ENCODE measurements at regions of chr6 and their contacts with region 1.

Region 1: DNA sequence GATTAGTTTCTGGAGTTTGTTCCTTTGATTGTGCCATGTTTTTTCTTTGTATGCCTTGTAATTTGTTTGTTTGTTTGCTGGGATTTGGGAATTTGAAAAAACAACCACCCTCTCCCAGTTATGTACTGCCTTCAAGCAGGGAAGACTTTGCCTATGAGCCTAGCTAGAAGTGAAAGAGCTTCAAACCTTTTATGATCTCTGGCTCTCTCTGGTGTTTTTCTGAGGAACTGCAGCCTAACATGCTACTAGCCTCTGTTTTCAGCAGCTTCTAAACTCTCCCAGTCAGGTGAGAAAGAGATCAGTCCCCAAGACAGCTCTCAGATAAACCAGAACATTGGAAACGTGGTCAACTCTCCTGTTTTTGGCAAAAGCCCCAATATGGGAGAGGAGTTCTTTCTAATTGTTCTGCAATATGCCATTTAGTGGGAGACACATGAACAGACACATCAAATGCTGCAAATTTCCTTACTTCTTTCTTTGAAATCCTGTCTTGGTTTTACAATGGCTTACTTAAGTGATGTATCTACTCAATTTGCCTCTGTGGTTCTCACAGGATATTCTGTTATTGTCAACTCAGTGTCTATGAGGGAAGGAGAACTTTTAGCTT is 58.9 kb upstream of the SERINC1 start:
- DNase-seq: no peak
- ATAC-seq: peak; percentile 88

Region 2: GRCh38 chr6:122389704-122390372 is 140.7 kb before region 1 on chr6:
- intact Hi-C with region 1: loop called (anchors 5 kb)
- DNase-seq: no peak
- ATAC-seq: no peak

Region 3: DNA sequence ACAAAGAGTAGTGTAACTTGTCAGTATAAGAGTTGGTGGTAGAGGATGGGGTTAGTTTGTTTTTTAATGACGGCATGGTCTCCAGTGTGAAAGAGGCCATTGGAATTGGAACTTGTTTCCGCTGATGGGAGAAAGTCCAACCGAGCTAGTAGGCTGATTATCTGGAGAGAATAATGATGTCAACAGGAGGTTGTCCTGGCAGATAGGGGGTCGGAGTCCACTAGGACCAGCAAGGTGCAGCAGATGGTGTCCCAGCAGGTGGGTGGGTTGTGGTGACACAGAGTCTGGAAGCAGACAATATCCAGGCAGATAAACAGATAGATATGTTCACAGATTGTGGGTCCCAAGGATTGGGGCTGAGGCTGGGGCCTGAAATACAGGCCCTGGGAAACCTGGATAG is 114.7 kb after region 1 on chr6:
- intact Hi-C with region 1: no loop called
- DNase-seq: no peak
- ATAC-seq: no peak

Region 4: DNA sequence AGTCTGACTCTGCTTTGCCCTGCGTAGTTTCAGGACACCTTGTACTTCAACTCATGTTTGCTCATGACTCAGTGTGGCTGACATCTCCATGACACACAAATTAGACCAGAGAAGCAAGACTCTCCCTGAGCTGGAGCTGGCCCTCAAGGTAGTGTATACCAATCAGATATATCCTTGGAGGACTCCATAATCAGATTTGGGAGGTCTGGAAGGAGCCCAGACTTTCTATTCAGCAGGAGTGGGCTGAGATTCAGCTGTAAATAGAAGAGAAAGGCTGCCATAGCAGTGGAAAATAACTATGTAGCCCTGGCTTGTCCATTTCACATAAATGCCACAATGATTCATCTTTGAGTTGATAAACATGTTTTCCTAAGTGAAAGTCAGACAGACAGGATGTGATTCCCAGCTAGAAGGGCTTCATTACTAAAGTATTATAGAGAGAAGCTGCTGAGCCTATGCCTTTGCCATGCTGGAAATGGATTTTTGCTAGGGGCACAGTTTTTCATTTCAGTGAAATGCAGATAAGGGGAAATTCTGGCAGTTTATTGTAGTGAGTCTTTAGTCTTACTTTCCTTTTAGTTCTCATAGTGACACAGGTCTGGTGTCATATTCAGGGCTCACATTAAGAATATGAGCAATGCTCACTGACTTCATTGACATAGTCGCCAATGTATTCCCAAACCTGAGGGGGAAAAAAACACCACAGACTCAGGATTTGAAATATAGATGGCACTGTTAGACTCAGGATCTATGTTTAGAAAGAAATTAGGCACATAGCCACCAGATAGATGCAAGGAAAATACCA is 560.8 kb after region 1 on chr6:
- intact Hi-C with region 1: no loop called
- DNase-seq: no peak
- ATAC-seq: no peak